Calu3 (cell line): ENCODE measurements at regions of chr3 and their contacts with region 1.

Region 1: DNA sequence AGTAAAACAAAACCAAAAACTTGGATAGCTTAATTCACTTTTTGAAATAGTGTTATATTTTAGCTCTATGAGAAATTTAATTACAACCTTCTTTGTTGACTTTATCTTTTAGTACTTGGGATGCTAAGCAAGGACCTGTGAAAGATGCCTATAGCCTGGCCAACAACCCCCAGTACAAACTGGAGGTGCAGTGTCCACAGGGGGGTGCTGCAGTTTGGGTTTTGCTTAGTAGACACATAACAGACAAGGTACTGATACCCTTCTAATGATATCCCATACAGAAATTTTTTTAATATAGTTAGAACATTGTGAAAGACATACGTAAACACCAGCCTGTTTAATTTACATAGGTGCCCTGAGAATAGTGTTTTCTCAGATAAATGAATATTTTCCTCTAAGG is 35.3 kb downstream of the CAPN7 start:
- DNase-seq: peak; percentile 21
- H3K4me3 Mint-ChIP-seq: no peak overlapping the region
- H3K27ac Mint-ChIP-seq: no peak overlapping the region
- H3K4me1 Mint-ChIP-seq: no peaks in the 10 kb centered on the region
- H3K27me3 Mint-ChIP-seq: no peaks in the 10 kb centered on the region
- CTCF ChIP-seq: no peak

Region 2: DNA sequence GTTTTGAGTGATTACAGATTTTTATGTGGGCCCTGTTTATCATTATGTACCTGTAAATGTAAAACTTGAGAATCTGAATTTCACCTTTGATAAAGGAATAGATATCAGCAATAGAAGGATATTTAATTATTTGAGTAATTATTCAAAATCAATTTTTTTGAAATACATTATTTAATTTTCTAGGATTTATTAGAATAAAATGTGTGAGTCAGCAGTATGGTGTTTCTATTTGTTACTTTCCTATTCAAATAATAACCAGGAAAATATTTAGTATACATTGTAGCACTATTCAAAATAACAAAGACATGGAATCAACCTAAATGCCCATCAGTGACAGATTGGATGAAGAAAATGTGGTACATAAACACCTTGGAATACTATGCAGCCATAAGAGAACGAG is 13.2 kb before region 1 on chr3:
- CTCF ChIA-PET with region 1: interaction called, 3 read pairs
- intact Hi-C with region 1: loop called (anchors 2 kb)
- DNase-seq: no peak
- H3K4me3 Mint-ChIP-seq: no peak overlapping the region
- H3K27ac Mint-ChIP-seq: no peak overlapping the region
- H3K4me1 Mint-ChIP-seq: no peaks in the 10 kb centered on the region
- H3K27me3 Mint-ChIP-seq: no peaks in the 10 kb centered on the region
- CTCF ChIP-seq: no peak